Naive thymus-derived CD4-positive, alpha-beta T cell (primary cell): ENCODE measurements at regions of chr19 and their contacts with region 1.

Region 1: DNA sequence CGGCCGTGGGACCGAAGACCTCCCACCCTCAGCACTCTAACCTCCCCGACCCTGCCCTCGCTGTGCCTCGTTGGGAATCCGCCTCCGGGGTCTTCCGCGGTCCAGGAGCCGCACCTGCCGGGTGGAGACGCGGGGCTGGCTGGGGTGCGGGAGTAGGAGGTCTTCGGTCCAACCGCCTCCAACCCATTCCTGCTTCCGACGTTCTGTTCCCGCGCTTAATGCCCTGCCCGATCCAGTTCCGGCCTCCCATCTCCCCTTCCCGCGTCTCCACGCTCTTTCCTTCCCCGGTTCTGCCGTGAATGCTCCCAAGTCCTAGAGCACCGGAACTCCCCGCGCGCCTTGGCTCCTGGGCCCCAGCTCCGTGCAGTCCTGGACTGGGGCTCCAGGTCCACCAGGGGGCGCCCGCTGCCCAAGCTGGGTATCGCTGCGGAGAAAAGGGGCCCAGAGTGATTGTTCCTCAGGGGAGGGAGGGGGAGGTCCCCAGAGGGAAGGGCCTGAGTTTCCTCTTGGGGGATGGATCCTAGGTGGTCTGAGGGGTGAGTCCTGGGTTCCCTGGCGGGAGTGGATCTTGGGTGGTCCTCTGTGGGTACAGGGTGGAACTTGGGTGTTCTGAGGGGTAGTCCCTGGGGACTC is 14.1 kb upstream of the TNFSF9 start:
- DNase-seq: peak; percentile 72 to 96 (median 85)
- ATAC-seq: peak; percentile 91
- H3K4me3 ChIP-seq: peak overlapping the region; percentile 68
- H3K4me3 Mint-ChIP-seq: peak overlapping the region; percentile 81 to 100 (median 96)
- H3K27ac ChIP-seq: peak overlapping the region; percentile 49
- H3K27ac Mint-ChIP-seq: peak overlapping the region; percentile 22 to 90 (median 69)
- H3K4me1 ChIP-seq: peaks cover 8 to 20% of the 10 kb centered on the region in 2 donors
- H3K4me1 Mint-ChIP-seq: peaks cover 22 to 35% (median 33%) of the 10 kb centered on the region in 7 donors
- H3K27me3 ChIP-seq: no peaks in the 10 kb centered on the region
- H3K27me3 Mint-ChIP-seq: peaks cover 0 to 2% (median 0%) of the 10 kb centered on the region in 5 donors

Region 2: DNA sequence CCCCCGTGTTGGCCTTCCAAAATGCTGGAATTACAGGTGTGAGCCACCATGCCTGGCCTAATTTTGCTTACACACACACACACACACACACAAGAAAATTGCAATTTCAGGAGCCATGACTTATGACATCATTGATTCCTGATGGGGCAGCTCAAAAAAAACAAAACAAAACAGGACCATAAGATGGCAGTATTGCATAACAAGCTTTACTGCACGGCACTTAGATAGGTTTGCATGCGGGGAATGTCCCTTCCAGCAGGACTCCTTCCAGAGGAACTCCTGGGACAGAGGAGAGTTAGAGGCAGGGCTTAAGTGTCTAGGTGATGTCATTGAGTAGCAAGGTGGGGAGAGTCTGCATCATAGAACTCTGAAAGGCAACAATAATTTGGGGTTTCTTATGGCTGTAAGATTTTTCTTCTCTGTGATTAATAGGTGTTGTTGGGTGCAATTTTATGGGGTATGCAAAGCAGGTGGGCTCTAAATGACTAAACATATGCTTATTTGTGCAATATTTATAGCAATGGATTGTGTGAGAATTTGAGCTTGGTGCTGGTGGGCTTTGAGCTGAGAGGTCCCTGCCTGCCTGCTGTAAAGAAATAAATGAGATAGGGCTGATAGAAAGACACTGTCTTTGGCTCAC is 390.3 kb before region 1 on chr19:
- CTCF ChIA-PET with region 1: no interaction called
- POLR2A ChIA-PET with region 1: no interaction called
- intact Hi-C with region 1: no loop called
- DNase-seq: peak in 4 of 9 donors; percentile 9 to 22 (median 16)
- ATAC-seq: peak; percentile 54
- H3K4me3 ChIP-seq: no peak overlapping the region
- H3K4me3 Mint-ChIP-seq: no peak overlapping the region
- H3K27ac ChIP-seq: no peak overlapping the region
- H3K27ac Mint-ChIP-seq: no peak overlapping the region
- H3K4me1 ChIP-seq: no peaks in the 10 kb centered on the region
- H3K4me1 Mint-ChIP-seq: peaks cover 0 to 7% (median 0%) of the 10 kb centered on the region in 7 donors
- H3K27me3 ChIP-seq: no peaks in the 10 kb centered on the region
- H3K27me3 Mint-ChIP-seq: no peaks in the 10 kb centered on the region

Region 3: DNA sequence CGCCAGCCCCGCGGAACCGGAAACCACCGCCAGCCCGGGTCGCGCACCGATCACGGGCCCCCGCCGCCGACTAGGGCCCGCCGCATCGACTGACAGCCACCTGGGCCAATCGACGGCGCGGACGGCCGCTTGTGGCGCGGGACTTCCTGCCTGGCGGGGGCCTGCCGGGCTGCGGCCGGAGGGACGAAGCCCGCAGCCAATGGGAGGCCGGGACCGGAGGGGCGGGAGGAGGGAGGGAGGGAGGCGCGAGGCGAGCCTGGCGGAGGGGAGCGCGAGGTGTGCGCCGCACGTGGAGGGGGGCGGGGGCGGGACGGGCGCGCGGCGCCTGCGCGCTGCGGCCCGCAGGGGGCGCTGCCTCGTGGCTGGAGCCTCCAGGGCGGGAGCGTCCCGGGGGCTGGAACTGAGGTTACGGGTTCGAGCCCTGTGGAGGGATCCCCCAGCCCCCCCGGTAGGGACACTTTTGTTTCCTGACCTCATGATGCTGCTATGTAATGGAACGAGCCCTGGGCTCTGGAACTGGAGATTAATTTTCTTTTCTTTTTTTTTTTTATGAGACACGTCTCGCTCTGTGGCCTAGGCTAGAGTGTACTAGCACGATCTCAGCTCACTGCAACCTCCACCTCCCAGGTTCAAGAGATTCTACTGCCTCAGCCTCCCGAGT is 236.7 kb before region 1 on chr19 and contains the start of gene MLLT1:
- CTCF ChIA-PET with region 1: no interaction called
- POLR2A ChIA-PET with region 1: interaction called, 4 read pairs
- intact Hi-C with region 1: loop called in 1 of 2 experiments (anchors 1 kb)
- DNase-seq: peak; percentile 88 to 98 (median 90)
- ATAC-seq: peak; percentile 96
- H3K4me3 ChIP-seq: peak within 1 kb of the TSS; percentile 54
- H3K4me3 Mint-ChIP-seq: peak within 1 kb of the TSS; percentile 85 to 97 (median 92)
- H3K27ac ChIP-seq: peak within 1 kb of the TSS; percentile 78
- H3K27ac Mint-ChIP-seq: peak within 1 kb of the TSS; percentile 87 to 95 (median 93)
- H3K4me1 ChIP-seq: peaks cover 3 to 20% of the 10 kb centered on the region in 2 donors
- H3K4me1 Mint-ChIP-seq: peaks cover 30 to 42% (median 39%) of the 10 kb centered on the region in 7 donors
- H3K27me3 ChIP-seq: no peaks in the 10 kb centered on the region
- H3K27me3 Mint-ChIP-seq: peaks cover 0 to 6% (median 0%) of the 10 kb centered on the region in 5 donors
- total RNA-seq, gene MLLT1: 33.3 to 47.5 (median 39.0) TPM

Region 4: GRCh38 chr19:6530386-6531161 is 13.8 kb after region 1 on chr19 and contains the start of gene TNFSF9:
- CTCF ChIA-PET with region 1: no interaction called
- POLR2A ChIA-PET with region 1: interaction called, 4 read pairs
- intact Hi-C with region 1: loop called (anchors 1 to 2 kb)
- DNase-seq: peak; percentile 51 to 93 (median 65)
- ATAC-seq: peak; percentile 90
- H3K4me3 ChIP-seq: peak within 1 kb of the TSS; percentile 36
- H3K4me3 Mint-ChIP-seq: peak within 1 kb of the TSS; percentile 81 to 93 (median 86)
- H3K27ac ChIP-seq: peak within 1 kb of the TSS; percentile 58
- H3K27ac Mint-ChIP-seq: peak within 1 kb of the TSS; percentile 9 to 85 (median 64)
- H3K4me1 ChIP-seq: peaks cover 20 to 27% of the 10 kb centered on the region in 2 donors
- H3K4me1 Mint-ChIP-seq: peaks cover 33 to 43% (median 37%) of the 10 kb centered on the region in 7 donors
- H3K27me3 ChIP-seq: peaks cover 0 to 16% of the 10 kb centered on the region in 2 donors
- H3K27me3 Mint-ChIP-seq: peaks cover 27 to 46% (median 28%) of the 10 kb centered on the region in 5 donors
- total RNA-seq, gene TNFSF9: 0.38 to 3.9 (median 3.0) TPM in 4 of 5 experiments, not detected in the other

Region 5: GRCh38 chr19:6590827-6591319 is 74.1 kb after region 1 on chr19 and contains the start of gene CD70:
- CTCF ChIA-PET with region 1: no interaction called
- POLR2A ChIA-PET with region 1: no interaction called
- intact Hi-C with region 1: loop called (anchors 2 to 5 kb)
- DNase-seq: peak in 6 of 9 donors; percentile 10 to 68 (median 17)
- ATAC-seq: peak; percentile 74
- H3K4me3 ChIP-seq: peak within 1 kb of the TSS; percentile 56
- H3K4me3 Mint-ChIP-seq: peak within 1 kb of the TSS; percentile 58 to 93 (median 82)
- H3K27ac ChIP-seq: no peak within 1 kb of the TSS
- H3K27ac Mint-ChIP-seq: peak within 1 kb of the TSS in 2 of 9 donors; percentile 1 to 87
- H3K4me1 ChIP-seq: peaks cover 30 to 46% of the 10 kb centered on the region in 2 donors
- H3K4me1 Mint-ChIP-seq: peaks cover 40 to 61% (median 47%) of the 10 kb centered on the region in 7 donors
- H3K27me3 ChIP-seq: peaks cover 0 to 20% of the 10 kb centered on the region in 2 donors
- H3K27me3 Mint-ChIP-seq: peaks cover 46 to 71% (median 66%) of the 10 kb centered on the region in 5 donors
- total RNA-seq, gene CD70: 1.2 to 39.6 TPM in 2 of 5 experiments, not detected in the others

Region 6: GRCh38 chr19:6753178-6754031 is 236.6 kb after region 1 on chr19:
- CTCF ChIA-PET with region 1: interaction called, 3 read pairs
- POLR2A ChIA-PET with region 1: no interaction called
- intact Hi-C with region 1: loop called in 1 of 2 experiments (anchors 1 kb)
- DNase-seq: peak; percentile 64 to 86 (median 75)
- ATAC-seq: peak; percentile 96
- H3K4me3 ChIP-seq: peak overlapping the region; percentile 64
- H3K4me3 Mint-ChIP-seq: peak overlapping the region; percentile 64 to 89 (median 74)
- H3K27ac ChIP-seq: peak overlapping the region; percentile 48
- H3K27ac Mint-ChIP-seq: peak overlapping the region; percentile 41 to 93 (median 88)
- H3K4me1 ChIP-seq: no peaks in the 10 kb centered on the region
- H3K4me1 Mint-ChIP-seq: peaks cover 5 to 14% (median 11%) of the 10 kb centered on the region in 7 donors
- H3K27me3 ChIP-seq: no peaks in the 10 kb centered on the region
- H3K27me3 Mint-ChIP-seq: no peaks in the 10 kb centered on the region

Region 7: DNA sequence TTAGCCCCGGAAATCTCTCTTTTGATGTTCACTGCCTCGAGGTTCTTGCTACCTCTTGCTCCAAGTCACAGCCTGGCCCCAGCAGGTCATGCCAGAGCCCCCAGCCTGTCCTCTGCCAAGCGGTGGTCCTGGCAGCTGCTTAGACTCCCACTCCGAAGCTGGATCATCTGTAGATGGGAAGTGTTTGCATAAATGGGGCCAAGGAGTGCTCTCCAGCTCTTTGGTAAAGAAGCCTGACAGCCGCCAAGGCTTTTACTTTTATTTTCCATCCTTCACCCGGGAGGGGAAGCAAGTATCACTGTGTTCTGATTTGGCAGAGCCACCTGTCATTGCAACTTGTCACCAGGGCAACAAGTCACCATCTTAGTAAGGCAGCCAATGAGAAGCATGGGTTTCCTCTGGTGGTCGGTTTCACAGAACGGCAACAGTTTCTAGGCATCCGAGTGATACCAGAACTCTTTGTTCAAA is 1141.5 kb after region 1 on chr19:
- CTCF ChIA-PET with region 1: no interaction called
- POLR2A ChIA-PET with region 1: no interaction called
- intact Hi-C with region 1: no loop called
- DNase-seq: peak in 7 of 9 donors; percentile 48 to 72 (median 69)
- ATAC-seq: peak; percentile 74
- H3K4me3 ChIP-seq: peak overlapping the region; percentile 59
- H3K4me3 Mint-ChIP-seq: peak overlapping the region; percentile 54 to 84 (median 76)
- H3K27ac ChIP-seq: peak overlapping the region; percentile 72
- H3K27ac Mint-ChIP-seq: peak overlapping the region; percentile 64 to 91 (median 88)
- H3K4me1 ChIP-seq: peaks cover 0 to 16% of the 10 kb centered on the region in 2 donors
- H3K4me1 Mint-ChIP-seq: peaks cover 5 to 19% (median 15%) of the 10 kb centered on the region in 7 donors
- H3K27me3 ChIP-seq: no peaks in the 10 kb centered on the region
- H3K27me3 Mint-ChIP-seq: no peaks in the 10 kb centered on the region